Pancreas (tissue), 10 donors: ENCODE measurements at regions of chr16 and their contacts with region 1.

Region 1: DNA sequence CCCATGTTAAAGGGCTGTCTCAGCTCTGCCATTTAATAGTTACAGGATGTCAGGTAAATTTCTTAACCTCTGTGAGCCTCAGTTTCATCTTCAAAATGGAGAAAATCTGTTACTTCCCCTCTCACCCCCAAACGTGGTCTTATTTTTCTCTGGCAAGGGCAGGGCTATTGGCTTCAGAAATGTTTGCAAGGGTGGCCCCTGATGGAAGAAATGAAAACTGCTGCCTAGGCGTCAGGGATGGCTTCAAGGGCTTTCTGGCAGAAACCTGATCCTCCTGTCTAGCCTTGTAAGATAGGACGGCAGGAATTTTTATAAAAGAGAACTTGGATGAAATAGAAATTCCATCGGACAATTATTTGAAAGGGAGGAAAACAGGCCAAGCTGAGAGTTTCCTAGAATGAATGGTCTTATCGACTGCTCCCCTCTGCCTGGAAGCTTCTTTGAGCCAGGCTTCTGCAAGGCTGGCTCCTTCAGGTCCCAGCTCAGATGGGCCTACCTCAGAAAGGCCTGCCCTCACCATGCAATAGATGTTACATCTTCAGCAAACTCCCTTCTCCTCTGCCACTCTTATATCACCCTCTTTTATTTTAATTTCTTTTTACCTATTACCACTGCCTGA is 43.0 kb upstream of the TANGO6 start:
- DNase-seq: peak in 3 of 6 donors; percentile 32 to 80 (median 67)
- ATAC-seq: peak; percentile 78 to 92 (median 86)
- H3K4me3 ChIP-seq: no peak overlapping the region
- H3K27ac ChIP-seq: peak overlapping the region in 2 of 4 donors; percentile 36 to 58
- H3K4me1 ChIP-seq: peaks cover 9 to 26% (median 20%) of the 10 kb centered on the region in 3 donors
- H3K27me3 ChIP-seq: no peaks in the 10 kb centered on the region
- CTCF ChIP-seq: peak; percentile 31 to 65 (median 36)

Region 2: DNA sequence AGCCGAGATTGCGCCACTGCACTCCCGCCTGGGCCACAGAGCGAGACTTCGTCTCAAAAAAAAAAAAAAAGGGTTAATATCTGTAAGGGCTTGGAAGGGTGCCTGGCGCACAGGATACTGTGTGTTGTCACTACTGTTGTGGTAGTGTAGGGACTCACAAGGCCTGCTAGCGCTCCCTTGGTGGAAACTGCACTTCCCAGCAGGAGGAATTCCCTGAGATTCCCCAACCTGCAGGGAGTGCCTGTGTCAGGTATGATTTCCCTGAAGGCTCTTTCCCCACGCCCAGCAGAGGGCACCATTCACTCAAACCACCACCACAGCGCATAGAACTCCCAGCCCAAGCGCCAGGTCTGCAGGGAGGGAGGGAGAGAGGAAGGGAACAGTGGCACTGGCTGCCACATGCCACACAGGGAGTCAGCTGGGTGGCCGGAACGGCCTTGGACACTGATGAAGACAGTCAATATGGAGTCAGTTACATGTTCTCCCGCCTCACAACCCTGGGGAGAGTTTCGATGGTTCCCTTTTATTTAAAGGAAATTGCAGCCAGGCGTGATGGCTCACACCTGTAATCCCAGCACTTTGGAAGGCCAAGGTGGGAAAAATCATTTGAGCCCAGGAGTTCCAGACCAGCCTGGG is 96.0 kb before region 1 on chr16:
- intact Hi-C with region 1: loop called in 2 of 3 experiments (anchors 2 to 10 kb)
- DNase-seq: peak; percentile 88 to 96 (median 93)
- ATAC-seq: peak; percentile 95 to 99 (median 98)
- H3K4me3 ChIP-seq: no peak overlapping the region
- H3K27ac ChIP-seq: peak overlapping the region in 1 of 4 donors; percentile 33
- H3K4me1 ChIP-seq: no peaks in the 10 kb centered on the region
- H3K27me3 ChIP-seq: no peaks in the 10 kb centered on the region
- CTCF ChIP-seq: peak; percentile 65 to 79 (median 74)

Region 3: GRCh38 chr16:69171325-69172084 is 371.1 kb after region 1 on chr16:
- intact Hi-C with region 1: no loop called
- DNase-seq: no peak
- ATAC-seq: peak in 3 of 4 donors; percentile 20 to 38 (median 37)
- H3K4me3 ChIP-seq: no peak overlapping the region
- H3K27ac ChIP-seq: peak overlapping the region in 3 of 4 donors; percentile 33 to 63 (median 52)
- H3K4me1 ChIP-seq: peaks cover 5 to 19% (median 16%) of the 10 kb centered on the region in 3 donors
- H3K27me3 ChIP-seq: no peaks in the 10 kb centered on the region
- CTCF ChIP-seq: no peak